Panc1 (cell line): ENCODE measurements at regions of chrX and their contacts with region 1.

Region 1: GRCh38 chrX:107716816-107717700 is 58.5 kb downstream of the TSC22D3 start:
- DNase-seq: no peak
- ATAC-seq: peak; percentile 71
- H3K4me3 ChIP-seq: peak overlapping the region; percentile 64 to 87
- H3K27ac ChIP-seq: peak overlapping the region; percentile 58; the same call in 1 of the 2 replicates
- H3K4me1 ChIP-seq: peaks cover 8% of the 10 kb centered on the region; the same call in 1 of the 2 replicates
- H3K27me3 ChIP-seq: no peaks in the 10 kb centered on the region
- CTCF ChIP-seq: no peak

Region 2: GRCh38 chrX:107537815-107538214 is 179.2 kb before region 1 on chrX:
- CTCF ChIA-PET with region 1: no interaction called
- POLR2A ChIA-PET with region 1: no interaction called
- in situ Hi-C with region 1: no loop called
- intact Hi-C with region 1: loop called (anchors 2 kb)
- DNase-seq: peak; percentile 41
- ATAC-seq: peak; percentile 89
- H3K4me3 ChIP-seq: no peak overlapping the region
- H3K27ac ChIP-seq: no peak overlapping the region
- H3K4me1 ChIP-seq: no peaks in the 10 kb centered on the region
- H3K27me3 ChIP-seq: no peaks in the 10 kb centered on the region
- CTCF ChIP-seq: peak; percentile 81

Region 3: GRCh38 chrX:107610667-107611066 is 106.4 kb before region 1 on chrX:
- CTCF ChIA-PET with region 1: no interaction called
- POLR2A ChIA-PET with region 1: no interaction called
- in situ Hi-C with region 1: no loop called
- intact Hi-C with region 1: no loop called
- DNase-seq: no peak
- ATAC-seq: no peak
- H3K4me3 ChIP-seq: no peak overlapping the region
- H3K27ac ChIP-seq: no peak overlapping the region
- H3K4me1 ChIP-seq: no peaks in the 10 kb centered on the region
- H3K27me3 ChIP-seq: no peaks in the 10 kb centered on the region
- CTCF ChIP-seq: no peak

Region 4: GRCh38 chrX:107672955-107673378 is 44.1 kb before region 1 on chrX:
- CTCF ChIA-PET with region 1: interaction called, 8 read pairs
- POLR2A ChIA-PET with region 1: no interaction called
- in situ Hi-C with region 1: no loop called
- intact Hi-C with region 1: loop called (anchors 2 kb)
- DNase-seq: no peak
- ATAC-seq: 0 out of 2 replicates have a peak, but pooled peaks have one; percentile 31
- H3K4me3 ChIP-seq: no peak overlapping the region
- H3K27ac ChIP-seq: no peak overlapping the region
- H3K4me1 ChIP-seq: peaks cover 25% of the 10 kb centered on the region
- H3K27me3 ChIP-seq: no peaks in the 10 kb centered on the region
- CTCF ChIP-seq: peak; percentile 89